Endothelial cell of umbilical vein (primary cell): ENCODE measurements at regions of chr20 and their contacts with region 1.

Region 1: DNA sequence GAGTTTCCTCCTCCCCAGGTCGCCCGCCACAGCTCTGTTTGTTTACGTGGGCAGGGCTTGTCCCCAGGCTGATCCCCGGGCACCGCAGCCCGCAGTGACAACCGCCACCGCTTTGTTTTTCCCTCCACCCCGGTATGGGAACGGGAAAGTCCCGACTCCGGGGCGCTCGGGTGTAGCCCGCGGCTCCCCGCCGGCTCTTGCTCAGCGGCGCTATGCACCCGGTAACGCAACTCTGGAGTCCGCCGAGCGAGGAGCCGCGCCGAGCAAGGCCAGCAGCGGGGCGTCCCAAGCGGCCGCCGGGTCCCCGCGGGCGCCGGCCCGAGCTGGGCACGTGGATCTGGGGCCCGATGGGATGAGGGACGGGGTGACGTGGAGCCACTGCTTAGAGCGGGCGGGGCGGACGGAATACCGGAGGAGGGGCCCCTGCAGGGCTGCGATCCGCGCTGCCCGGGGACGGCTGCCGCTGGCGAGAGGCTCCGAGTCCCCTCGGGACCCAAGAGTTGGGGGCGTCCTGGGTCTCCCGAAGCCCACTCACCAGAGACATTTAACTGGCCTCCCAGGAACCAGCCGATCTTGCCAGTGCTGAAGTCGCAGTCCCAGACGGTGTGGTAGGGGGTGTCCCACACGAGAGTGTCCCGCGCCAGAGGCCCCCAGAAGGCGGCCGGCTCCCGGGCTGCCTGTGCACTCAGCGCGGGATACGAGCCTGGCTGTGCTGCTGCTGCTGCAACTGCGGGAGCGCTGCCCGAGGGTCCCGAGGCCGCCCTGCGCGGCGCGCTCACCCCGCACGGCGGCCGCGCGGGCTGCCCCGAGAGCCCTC is 497 bp downstream of the ACSS1 start:
- DNase-seq: peak; percentile 51
- H3K4me3 ChIP-seq: peak overlapping the region; percentile 1 to 50 (median 48)
- H3K27ac ChIP-seq: no peak overlapping the region
- H3K4me1 ChIP-seq: peaks cover 7% of the 10 kb centered on the region
- H3K27me3 ChIP-seq: peaks cover 13 to 19% of the 10 kb centered on the region in 2 experiments
- CTCF ChIP-seq: no peak
- POLR2A ChIP-seq: no peak

Region 2: DNA sequence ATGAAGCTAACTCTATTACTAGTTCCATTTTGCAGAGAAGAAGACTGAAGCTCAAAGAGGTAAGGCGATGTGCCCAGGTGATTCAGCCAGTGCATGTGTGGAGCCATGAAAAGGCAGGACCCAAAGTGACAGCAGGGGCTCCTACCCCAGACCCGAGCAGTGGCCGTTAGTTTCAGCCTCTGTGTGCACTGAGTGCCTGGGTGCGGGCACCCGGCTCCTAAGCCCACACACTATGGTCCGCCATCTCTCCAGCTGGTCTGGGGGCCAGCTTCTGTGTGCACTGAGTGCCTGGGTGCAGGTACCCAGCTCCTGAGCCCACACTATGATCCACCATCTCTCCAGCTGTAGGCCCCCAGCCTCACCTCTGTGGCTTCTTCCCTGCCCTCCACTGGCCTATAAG is 231.9 kb before region 1 on chr20:
- CTCF ChIA-PET with region 1: no interaction called
- POLR2A ChIA-PET with region 1: no interaction called
- dilution Hi-C with region 1: no loop called
- intact Hi-C with region 1: no loop called
- DNase-seq: no peak
- H3K4me3 ChIP-seq: no peak overlapping the region
- H3K27ac ChIP-seq: no peak overlapping the region
- H3K4me1 ChIP-seq: no peaks in the 10 kb centered on the region
- H3K27me3 ChIP-seq: no peaks in the 10 kb centered on the region
- CTCF ChIP-seq: no peak
- POLR2A ChIP-seq: no peak

Region 3: DNA sequence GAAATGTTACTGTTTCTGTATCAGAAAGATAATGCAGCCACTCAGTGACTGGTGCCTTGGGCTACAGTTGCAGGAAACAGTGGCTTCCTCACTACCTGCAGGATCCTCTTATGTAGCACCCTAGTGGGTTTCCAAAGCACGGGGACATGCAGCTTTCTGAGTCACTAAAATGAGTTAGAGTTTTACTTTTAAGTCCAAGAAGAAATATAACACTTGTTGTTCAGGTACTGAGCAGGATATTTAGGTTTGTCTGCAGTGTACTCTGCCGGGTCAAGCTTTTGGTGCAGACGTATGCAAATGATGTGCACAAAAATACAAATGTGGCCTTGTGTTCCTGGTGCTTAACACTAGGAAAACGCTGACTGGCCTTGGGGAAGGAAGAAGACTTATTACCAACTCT is 21.5 kb before region 1 on chr20:
- CTCF ChIA-PET with region 1: interaction called, 4 read pairs
- POLR2A ChIA-PET with region 1: no interaction called
- dilution Hi-C with region 1: no loop called
- intact Hi-C with region 1: loop called (anchors 1 kb)
- DNase-seq: no peak
- H3K4me3 ChIP-seq: no peak overlapping the region
- H3K27ac ChIP-seq: no peak overlapping the region
- H3K4me1 ChIP-seq: peaks cover 12% of the 10 kb centered on the region
- H3K27me3 ChIP-seq: no peaks in the 10 kb centered on the region
- CTCF ChIP-seq: no peak
- POLR2A ChIP-seq: no peak